CD8-positive, alpha-beta T cell (primary cell): ENCODE measurements at regions of chr3 and their contacts with region 1.

Region 1: GRCh38 chr3:186959029-186959624 is 28.8 kb downstream of the ST6GAL1 start:
- DNase-seq: no peak
- ATAC-seq: no peak
- H3K4me3 ChIP-seq: no peak overlapping the region
- H3K4me3 Mint-ChIP-seq: no peak overlapping the region
- H3K27ac ChIP-seq: no peak overlapping the region
- H3K27ac Mint-ChIP-seq: peak overlapping the region; percentile 78
- H3K4me1 ChIP-seq: peaks cover 4% of the 10 kb centered on the region
- H3K4me1 Mint-ChIP-seq: peaks cover 58% of the 10 kb centered on the region
- H3K27me3 ChIP-seq: no peaks in the 10 kb centered on the region
- H3K27me3 Mint-ChIP-seq: no peaks in the 10 kb centered on the region
- CTCF ChIP-seq: no peak

Region 2: GRCh38 chr3:185613016-185613415 is 1346.1 kb before region 1 on chr3:
- CTCF ChIA-PET with region 1: no interaction called
- POLR2A ChIA-PET with region 1: no interaction called
- intact Hi-C with region 1: no loop called
- DNase-seq: no peak
- ATAC-seq: no peak
- H3K4me3 ChIP-seq: no peak overlapping the region
- H3K4me3 Mint-ChIP-seq: no peak overlapping the region
- H3K27ac ChIP-seq: peak overlapping the region in 1 of 2 experiments; percentile 4
- H3K27ac Mint-ChIP-seq: no peak overlapping the region
- H3K4me1 ChIP-seq: no peaks in the 10 kb centered on the region
- H3K4me1 Mint-ChIP-seq: no peaks in the 10 kb centered on the region
- H3K27me3 ChIP-seq: no peaks in the 10 kb centered on the region
- H3K27me3 Mint-ChIP-seq: no peaks in the 10 kb centered on the region
- CTCF ChIP-seq: no peak

Region 3: DNA sequence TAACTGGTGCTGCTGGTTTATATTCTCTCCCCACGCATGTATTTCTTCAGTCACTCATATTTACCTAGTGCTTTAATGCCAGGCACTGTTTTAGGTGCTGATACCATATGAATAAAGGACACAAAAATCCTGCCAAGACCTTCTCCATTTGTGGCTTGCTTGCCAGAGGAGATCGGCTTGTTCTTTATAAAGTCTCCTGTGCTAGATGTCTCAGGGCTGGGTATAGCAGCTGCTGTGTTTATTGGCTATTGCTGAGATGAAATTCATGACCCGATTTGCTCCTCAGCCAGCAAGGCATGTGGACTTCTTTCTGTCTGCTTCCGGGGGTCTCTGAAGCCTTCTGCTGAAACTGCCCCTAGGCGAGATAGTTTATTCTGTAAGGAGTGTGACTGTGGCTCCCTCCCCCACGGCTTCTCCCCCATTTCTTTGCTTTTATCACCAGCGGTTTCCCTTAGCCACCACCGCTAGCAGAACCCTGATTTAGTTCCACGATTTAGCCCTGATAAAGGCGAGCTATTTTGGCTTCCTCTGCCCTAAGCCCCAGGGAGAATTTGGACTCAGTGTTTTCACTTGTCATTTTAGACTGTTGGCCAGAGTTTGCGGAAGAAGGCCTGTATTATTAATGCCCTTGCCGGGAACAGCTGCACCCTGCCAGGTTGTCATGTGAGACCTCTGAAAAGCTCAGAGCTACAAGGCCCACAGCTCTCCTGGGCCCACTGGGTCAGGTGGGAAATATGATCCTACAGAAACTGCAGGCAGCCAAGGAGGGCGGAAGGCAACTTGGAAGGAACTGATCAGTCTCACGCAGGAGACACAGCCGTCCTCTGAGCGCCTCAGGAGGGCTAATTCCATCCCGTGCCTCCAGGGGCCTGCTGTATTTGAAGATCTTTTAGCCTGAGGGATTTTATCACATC is 18.0 kb after region 1 on chr3:
- CTCF ChIA-PET with region 1: interaction called, 3 read pairs
- POLR2A ChIA-PET with region 1: interaction called, 3 read pairs
- intact Hi-C with region 1: loop called in 1 of 2 experiments (anchors 2 kb)
- DNase-seq: no peak
- ATAC-seq: no peak
- H3K4me3 ChIP-seq: no peak overlapping the region
- H3K4me3 Mint-ChIP-seq: no peak overlapping the region
- H3K27ac ChIP-seq: no peak overlapping the region
- H3K27ac Mint-ChIP-seq: no peak overlapping the region
- H3K4me1 ChIP-seq: no peaks in the 10 kb centered on the region
- H3K4me1 Mint-ChIP-seq: peaks cover 15% of the 10 kb centered on the region
- H3K27me3 ChIP-seq: no peaks in the 10 kb centered on the region
- H3K27me3 Mint-ChIP-seq: no peaks in the 10 kb centered on the region
- CTCF ChIP-seq: no peak